GM18951 (cell line): ENCODE measurements at regions of chr12 and their contacts with region 1.

Region 1: DNA sequence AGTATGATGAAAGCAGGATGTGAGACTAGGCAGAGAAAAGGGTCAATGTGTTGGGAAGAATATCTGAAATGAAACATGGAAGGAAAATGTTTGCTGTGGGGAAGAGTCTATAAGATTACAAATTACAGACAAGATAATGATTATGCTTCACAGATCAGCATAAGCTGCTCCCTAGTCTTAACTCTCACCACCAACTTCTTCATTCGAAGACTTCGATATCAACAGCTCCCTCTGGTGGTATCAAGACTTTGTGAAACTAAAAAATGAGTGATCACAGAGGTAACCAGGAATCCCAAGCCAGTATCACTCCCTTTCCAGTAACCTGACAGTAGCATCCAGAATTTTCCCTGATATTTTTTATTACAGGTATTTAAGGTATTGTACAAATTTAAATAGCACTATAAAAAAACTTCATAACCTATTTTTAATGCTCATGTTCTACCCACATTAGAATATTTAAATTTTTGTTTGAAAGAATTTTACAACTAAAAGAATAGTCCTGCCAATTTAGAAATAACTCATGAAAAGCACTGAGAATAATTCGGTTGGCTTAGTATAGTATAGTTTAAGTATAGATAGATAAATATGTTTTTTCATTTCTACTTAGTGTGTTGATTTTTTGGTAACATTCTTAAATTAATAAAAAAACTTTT is 84.4 kb downstream of the C2CD5 start:
- POLR2A ChIP-seq: no peak

Region 2: DNA sequence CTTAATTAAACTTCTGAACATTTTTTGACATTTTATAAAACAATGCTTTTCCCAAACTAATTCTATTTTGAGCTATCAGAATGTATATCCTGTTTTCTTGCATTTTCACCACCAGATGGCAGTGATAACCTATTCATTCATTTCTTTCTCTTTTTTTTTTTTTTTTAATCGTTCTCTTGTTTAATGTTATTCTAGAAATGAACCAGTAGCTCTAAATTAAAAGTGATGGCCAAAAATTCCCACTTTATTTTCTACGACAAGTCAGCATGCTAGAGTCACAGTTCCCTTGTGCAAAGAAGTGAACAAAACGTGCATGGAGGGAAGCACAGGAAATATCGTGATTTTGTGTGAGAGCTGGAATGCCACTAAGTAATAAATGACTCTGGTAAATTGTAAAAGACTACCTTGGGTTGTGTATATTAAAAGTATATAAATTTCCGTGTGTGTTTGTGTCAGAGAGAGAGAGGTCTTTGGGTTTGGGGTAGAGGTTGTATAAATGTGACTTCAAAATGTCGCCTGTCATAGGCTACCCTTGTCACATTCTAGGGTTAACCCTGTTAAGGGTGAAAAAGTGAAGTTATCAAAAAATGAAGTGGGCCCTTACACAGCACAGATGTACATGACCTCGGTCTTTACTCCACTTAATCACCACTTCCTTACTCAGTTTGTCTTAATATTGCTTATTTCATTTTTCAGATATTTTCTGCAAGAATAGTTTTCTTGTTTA is 761.9 kb before region 1 on chr12:
- in situ Hi-C with region 1: loop called (anchors 10 kb)
- POLR2A ChIP-seq: no peak